ENCODE measurements at regions of chr5 and their contacts with region 1.

Region 1: DNA sequence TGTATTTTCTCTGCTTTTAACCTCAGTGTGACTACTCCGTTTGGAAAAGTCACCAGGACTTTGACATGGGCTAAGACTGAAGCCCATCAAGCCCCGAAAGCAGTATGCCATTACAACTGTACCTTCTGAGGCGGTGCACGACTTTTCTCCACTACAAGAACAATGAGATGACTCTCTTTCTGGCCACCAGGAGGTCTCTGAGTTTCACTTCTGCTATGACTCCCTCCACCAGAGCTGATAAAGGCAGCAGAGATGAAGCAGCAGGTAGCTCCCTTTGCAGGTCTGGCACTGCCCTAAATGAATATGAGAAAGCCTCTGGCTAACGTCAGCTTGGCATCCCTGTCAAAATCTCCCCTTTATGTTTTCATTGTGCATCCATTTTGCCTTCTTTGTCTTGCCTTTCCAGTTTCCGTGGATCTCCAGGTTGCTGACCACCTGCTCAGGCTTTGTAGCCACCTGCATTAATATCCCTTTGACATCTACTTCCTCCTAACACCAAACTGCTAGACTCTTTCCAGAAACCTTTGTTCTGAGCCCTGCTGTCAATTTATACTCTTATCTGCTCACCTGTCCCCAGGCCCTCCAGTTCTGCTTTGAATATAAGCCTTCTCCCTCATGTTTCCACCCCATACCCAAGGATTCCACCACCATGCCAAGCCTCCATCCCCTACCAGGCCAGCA is 221.7 kb downstream of the ZNF608 start:
- DNase-seq: no peak
- ATAC-seq: peak; percentile 92
- H3K4me3 Mint-ChIP-seq: no peak overlapping the region
- H3K27ac Mint-ChIP-seq: peak overlapping the region; percentile 3
- H3K4me1 Mint-ChIP-seq: peaks cover 35% of the 10 kb centered on the region
- H3K27me3 Mint-ChIP-seq: peaks cover 9% of the 10 kb centered on the region
- CTCF ChIP-seq: no peak

Region 2: GRCh38 chr5:123937230-123937629 is 587.5 kb before region 1 on chr5:
- CTCF ChIA-PET with region 1: no interaction called
- POLR2A ChIA-PET with region 1: no interaction called
- intact Hi-C with region 1: loop called (anchors 2 kb)
- DNase-seq: peak; percentile 24
- ATAC-seq: no peak
- H3K4me3 Mint-ChIP-seq: no peak overlapping the region
- H3K27ac Mint-ChIP-seq: no peak overlapping the region
- H3K4me1 Mint-ChIP-seq: peaks cover 5% of the 10 kb centered on the region
- H3K27me3 Mint-ChIP-seq: no peaks in the 10 kb centered on the region
- CTCF ChIP-seq: peak; percentile 53

Region 3: GRCh38 chr5:124453221-124454051 is 71.3 kb before region 1 on chr5:
- CTCF ChIA-PET with region 1: no interaction called
- POLR2A ChIA-PET with region 1: no interaction called
- intact Hi-C with region 1: loop called (anchors 2 kb)
- DNase-seq: peak; percentile 31
- ATAC-seq: peak; percentile 95
- H3K4me3 Mint-ChIP-seq: peak overlapping the region; percentile 67
- H3K27ac Mint-ChIP-seq: peak overlapping the region; percentile 79
- H3K4me1 Mint-ChIP-seq: peaks cover 43% of the 10 kb centered on the region
- H3K27me3 Mint-ChIP-seq: no peaks in the 10 kb centered on the region
- CTCF ChIP-seq: no peak

Region 4: GRCh38 chr5:124824637-124825158 is 300.0 kb after region 1 on chr5:
- CTCF ChIA-PET with region 1: no interaction called
- POLR2A ChIA-PET with region 1: no interaction called
- intact Hi-C with region 1: loop called (anchors 10 kb)
- DNase-seq: no peak
- ATAC-seq: no peak
- H3K4me3 Mint-ChIP-seq: no peak overlapping the region
- H3K27ac Mint-ChIP-seq: peak overlapping the region; percentile 74
- H3K4me1 Mint-ChIP-seq: peaks cover 17% of the 10 kb centered on the region
- H3K27me3 Mint-ChIP-seq: no peaks in the 10 kb centered on the region
- CTCF ChIP-seq: no peak

Region 5: GRCh38 chr5:125835293-125836172 is 1310.8 kb after region 1 on chr5:
- CTCF ChIA-PET with region 1: interaction called, 3 read pairs
- POLR2A ChIA-PET with region 1: no interaction called
- intact Hi-C with region 1: loop called (anchors 5 kb)
- DNase-seq: no peak
- ATAC-seq: peak; percentile 56
- H3K4me3 Mint-ChIP-seq: no peak overlapping the region
- H3K27ac Mint-ChIP-seq: no peak overlapping the region
- H3K4me1 Mint-ChIP-seq: peaks cover 3% of the 10 kb centered on the region
- H3K27me3 Mint-ChIP-seq: peaks cover 6% of the 10 kb centered on the region
- CTCF ChIP-seq: no peak

Measured in activated B cell treated with CpG ODN at 0.5 μM for 24 hours (primary cell).